B cell (primary cell): ENCODE measurements at regions of chr1 and their contacts with region 1.

Region 1: DNA sequence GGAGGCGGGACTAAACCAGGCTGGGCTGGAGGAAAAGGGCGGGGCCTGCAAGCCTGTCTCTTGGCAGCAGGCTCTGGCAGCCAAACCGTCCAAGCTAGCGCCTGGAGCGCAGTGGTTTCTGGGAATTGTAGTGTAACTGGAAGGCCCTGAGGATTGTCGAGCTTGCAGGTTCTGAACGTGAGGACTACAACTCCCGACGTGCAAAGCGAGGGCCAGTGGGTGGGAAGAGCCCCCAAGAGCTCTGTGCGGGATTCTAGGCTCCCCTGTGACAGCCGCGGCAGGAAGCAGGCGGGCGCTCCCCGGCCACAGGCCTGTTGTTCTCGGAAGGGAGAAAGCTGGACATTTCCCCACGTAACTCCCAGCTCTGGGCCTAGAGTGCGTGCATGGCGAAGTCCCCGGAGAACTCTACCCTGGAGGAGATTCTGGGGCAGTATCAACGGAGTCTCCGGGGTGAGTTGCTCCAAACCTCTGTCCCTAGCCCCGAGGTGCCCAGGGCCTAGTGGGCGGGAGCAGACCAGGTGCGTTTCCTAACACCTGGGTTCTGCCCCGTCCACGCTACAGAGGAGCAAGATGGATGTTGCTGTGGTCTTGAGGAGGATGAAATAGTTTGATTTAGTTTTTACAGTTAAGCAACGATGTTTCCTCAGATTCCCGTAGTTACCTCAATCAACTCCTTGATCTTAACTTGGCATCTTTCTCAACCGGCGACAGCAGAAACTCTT is at the start of gene SDCCAG8:
- DNase-seq: peak; percentile 98
- ATAC-seq: peak; percentile 77
- H3K4me3 ChIP-seq: peak within 1 kb of the TSS; percentile 75 to 100 (median 94)
- H3K4me3 Mint-ChIP-seq: peak within 1 kb of the TSS; percentile 97
- H3K27ac ChIP-seq: peak within 1 kb of the TSS; percentile 97 to 99
- H3K27ac Mint-ChIP-seq: peak within 1 kb of the TSS; percentile 99
- H3K4me1 ChIP-seq: peaks cover 19 to 29% of the 10 kb centered on the region in 2 donors
- H3K4me1 Mint-ChIP-seq: peaks cover 45% of the 10 kb centered on the region
- H3K27me3 ChIP-seq: no peaks in the 10 kb centered on the region
- H3K27me3 Mint-ChIP-seq: no peaks in the 10 kb centered on the region
- CTCF ChIP-seq: no peak
- total RNA-seq, gene SDCCAG8: 60.7 and 64.8 TPM in 2 replicates

Region 2: DNA sequence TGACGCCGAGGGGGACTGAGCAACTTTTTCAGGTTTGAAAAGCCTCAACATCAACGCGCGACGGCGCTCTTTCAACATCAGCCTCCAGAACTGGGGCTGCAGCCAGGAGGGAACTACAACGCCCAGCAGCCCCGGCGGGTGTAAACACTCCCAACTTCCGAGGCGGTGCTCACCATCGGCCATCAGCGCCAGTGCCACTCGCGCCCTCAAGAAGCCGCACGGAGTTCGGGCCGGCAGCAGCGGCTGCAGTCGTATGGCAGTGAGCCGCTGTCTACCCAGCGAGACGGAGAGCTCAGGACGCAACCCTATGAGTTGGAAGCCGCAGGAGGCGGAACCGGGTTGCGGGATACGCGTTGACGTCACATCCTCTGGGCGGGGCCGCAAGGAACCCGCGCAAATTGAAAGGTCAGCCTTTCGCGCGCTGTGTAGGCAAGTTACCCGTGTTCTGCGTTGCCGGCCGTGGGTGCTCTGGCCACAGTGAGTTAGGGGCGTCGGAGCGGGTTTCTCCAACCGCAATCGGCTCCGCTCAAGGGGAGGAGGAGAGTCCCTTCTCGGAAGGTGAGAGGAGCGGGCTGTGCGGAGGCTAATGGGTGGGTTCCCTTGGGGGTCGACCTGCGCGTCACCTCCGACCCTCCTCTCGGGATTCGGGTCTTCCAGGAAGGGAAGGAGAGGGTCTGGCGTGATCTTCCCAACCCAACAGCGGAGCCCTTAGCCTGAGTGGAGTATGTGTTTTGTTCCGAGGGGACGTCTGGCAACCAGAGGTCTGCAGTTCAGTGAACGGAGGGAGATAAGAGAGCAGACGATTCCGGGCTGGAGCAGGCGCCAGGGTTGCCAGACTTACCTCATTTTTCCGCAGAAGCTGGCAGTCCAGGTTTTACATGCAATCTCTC is 1407.9 kb before region 1 on chr1 and contains the start of gene EXO1:
- CTCF ChIA-PET with region 1: no interaction called
- POLR2A ChIA-PET with region 1: no interaction called
- intact Hi-C with region 1: loop called (anchors 10 kb)
- DNase-seq: peak; percentile 96
- ATAC-seq: peak; percentile 98
- H3K4me3 ChIP-seq: peak within 1 kb of the TSS; percentile 73 to 98 (median 95)
- H3K4me3 Mint-ChIP-seq: peak within 1 kb of the TSS; percentile 99
- H3K27ac ChIP-seq: peak within 1 kb of the TSS; percentile 92 to 97
- H3K27ac Mint-ChIP-seq: peak within 1 kb of the TSS; percentile 99
- H3K4me1 ChIP-seq: peaks cover 9 to 12% of the 10 kb centered on the region in 2 donors
- H3K4me1 Mint-ChIP-seq: peaks cover 17% of the 10 kb centered on the region
- H3K27me3 ChIP-seq: no peaks in the 10 kb centered on the region
- H3K27me3 Mint-ChIP-seq: no peaks in the 10 kb centered on the region
- CTCF ChIP-seq: peak; percentile 47
- total RNA-seq, gene EXO1: 1.2 and 1.6 TPM in 2 replicates

Region 3: GRCh38 chr1:243287652-243288051 is 31.7 kb after region 1 on chr1:
- CTCF ChIA-PET with region 1: interaction called, 4 read pairs
- POLR2A ChIA-PET with region 1: interaction called, 5 read pairs
- intact Hi-C with region 1: loop called (anchors 1 kb)
- DNase-seq: peak; percentile 74
- ATAC-seq: peak; percentile 91
- H3K4me3 ChIP-seq: no peak overlapping the region
- H3K4me3 Mint-ChIP-seq: peak overlapping the region; percentile 52
- H3K27ac ChIP-seq: peak overlapping the region; percentile 71 to 86
- H3K27ac Mint-ChIP-seq: peak overlapping the region; percentile 90
- H3K4me1 ChIP-seq: peaks cover 27 to 31% of the 10 kb centered on the region in 2 donors
- H3K4me1 Mint-ChIP-seq: peaks cover 51% of the 10 kb centered on the region
- H3K27me3 ChIP-seq: no peaks in the 10 kb centered on the region
- H3K27me3 Mint-ChIP-seq: no peaks in the 10 kb centered on the region
- CTCF ChIP-seq: no peak

Region 4: GRCh38 chr1:244302889-244303613 is 1047.1 kb after region 1 on chr1:
- CTCF ChIA-PET with region 1: no interaction called
- POLR2A ChIA-PET with region 1: no interaction called
- intact Hi-C with region 1: loop called (anchors 1 kb)
- DNase-seq: no peak
- ATAC-seq: no peak
- H3K4me3 ChIP-seq: no peak overlapping the region
- H3K4me3 Mint-ChIP-seq: no peak overlapping the region
- H3K27ac ChIP-seq: no peak overlapping the region
- H3K27ac Mint-ChIP-seq: no peak overlapping the region
- H3K4me1 ChIP-seq: peaks cover 4 to 17% of the 10 kb centered on the region in 2 donors
- H3K4me1 Mint-ChIP-seq: peaks cover 10% of the 10 kb centered on the region
- H3K27me3 ChIP-seq: no peaks in the 10 kb centered on the region
- H3K27me3 Mint-ChIP-seq: no peaks in the 10 kb centered on the region
- CTCF ChIP-seq: no peak